ENCODE measurements at regions of chr1 and their contacts with region 1.

Region 1: DNA sequence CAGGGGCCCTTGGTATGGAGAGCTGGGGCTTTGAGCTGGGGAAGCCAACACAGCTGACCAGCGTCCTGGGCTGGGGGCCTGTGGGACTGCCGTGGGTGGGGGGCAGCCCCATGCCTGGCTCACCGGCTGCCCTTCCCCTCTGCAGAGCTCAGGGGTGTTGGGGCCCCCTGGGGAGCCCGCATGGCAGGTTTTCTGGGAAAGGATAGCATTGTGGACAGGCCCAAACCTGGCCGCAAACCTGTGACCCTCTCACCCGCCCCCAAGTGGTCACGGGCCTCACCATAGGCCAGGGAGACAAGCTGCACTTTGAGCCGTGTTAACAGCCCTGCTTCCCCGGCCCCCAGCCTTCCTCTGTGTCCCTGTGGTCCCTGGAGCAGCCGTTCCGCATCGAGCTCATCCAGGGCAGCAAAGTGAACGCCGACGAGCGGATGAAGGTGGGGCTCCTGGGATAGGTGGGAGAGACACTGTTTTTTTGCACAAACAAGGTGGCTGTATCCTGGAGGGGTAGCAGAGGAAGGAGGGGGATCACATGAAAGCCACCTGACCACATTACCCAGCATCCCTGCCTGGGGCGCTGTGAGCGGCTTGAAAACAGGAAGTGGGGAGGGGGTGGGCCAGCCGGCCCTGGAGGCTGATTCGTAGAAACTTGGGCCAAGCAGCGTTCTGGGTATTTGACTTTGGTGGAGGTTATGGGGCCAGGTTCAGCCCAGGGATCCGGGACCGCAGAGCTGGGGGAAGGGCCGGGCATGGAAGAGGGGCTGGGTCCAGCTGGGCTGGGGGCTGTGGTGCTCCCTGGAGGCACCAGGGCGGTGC is 65.9 kb downstream of the PIK3CD start:
- DNase-seq: peak; percentile 90 to 95 (median 91)
- H3K4me3 ChIP-seq: peak overlapping the region; percentile 66 to 82
- H3K4me3 Mint-ChIP-seq: peak overlapping the region; percentile 91 to 96 (median 94)
- H3K27ac ChIP-seq: peak overlapping the region; percentile 58
- H3K27ac Mint-ChIP-seq: peak overlapping the region; percentile 92 to 97 (median 93)
- H3K4me1 ChIP-seq: peaks cover 96% of the 10 kb centered on the region
- H3K4me1 Mint-ChIP-seq: peaks cover 18 to 84% (median 56%) of the 10 kb centered on the region in 4 donors
- H3K27me3 ChIP-seq: no peaks in the 10 kb centered on the region
- H3K27me3 Mint-ChIP-seq: no peaks in the 10 kb centered on the region

Region 2: GRCh38 chr1:9643351-9644256 is 73.8 kb before region 1 on chr1:
- CTCF ChIA-PET with region 1: interaction called, 6 read pairs
- POLR2A ChIA-PET with region 1: interaction called, 23 read pairs
- intact Hi-C with region 1: no loop called
- DNase-seq: peak in 1 of 5 donors; percentile 9
- H3K4me3 ChIP-seq: no peak overlapping the region
- H3K4me3 Mint-ChIP-seq: peak overlapping the region in 7 of 8 donors; percentile 47 to 81 (median 62)
- H3K27ac ChIP-seq: no peak overlapping the region
- H3K27ac Mint-ChIP-seq: peak overlapping the region; percentile 57 to 85 (median 78)
- H3K4me1 ChIP-seq: peaks cover 39% of the 10 kb centered on the region
- H3K4me1 Mint-ChIP-seq: peaks cover 33 to 71% (median 49%) of the 10 kb centered on the region in 4 donors
- H3K27me3 ChIP-seq: no peaks in the 10 kb centered on the region
- H3K27me3 Mint-ChIP-seq: no peaks in the 10 kb centered on the region

Region 3: DNA sequence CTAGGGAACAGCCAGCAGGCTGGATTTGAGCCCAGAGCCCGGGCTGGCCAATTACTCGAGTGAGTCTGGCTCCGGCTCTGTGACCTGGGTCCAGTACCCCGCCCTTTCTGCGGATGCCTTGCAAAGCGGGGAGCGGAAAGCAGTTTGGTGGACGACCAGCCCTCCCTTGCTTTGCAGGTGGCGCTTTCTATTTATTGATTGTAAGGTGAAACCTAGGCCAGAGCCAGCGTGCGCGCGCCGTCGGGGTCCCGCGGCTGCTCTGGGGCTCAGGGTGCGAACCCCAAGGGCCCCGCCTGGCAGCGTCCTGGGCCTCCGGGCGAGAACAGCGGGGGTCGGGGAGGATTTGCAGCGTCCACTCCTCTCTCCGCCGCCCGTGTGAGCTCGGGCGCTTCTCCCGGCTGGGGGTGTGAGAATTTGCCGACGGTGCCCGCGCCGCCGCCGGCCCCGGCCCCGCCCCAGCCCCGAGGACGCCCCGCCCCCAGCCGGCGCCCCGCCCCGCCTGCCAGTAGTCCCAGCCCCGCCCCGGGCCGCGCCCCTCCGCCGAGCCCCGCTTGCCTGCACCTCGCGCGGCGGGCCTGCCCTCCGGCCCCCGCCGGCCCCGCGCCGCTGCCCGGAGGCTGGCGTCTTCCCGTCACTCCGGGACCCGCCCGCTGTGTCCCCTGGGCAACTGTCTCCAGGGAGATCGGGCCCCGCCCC is 28.2 kb before region 1 on chr1:
- CTCF ChIA-PET with region 1: interaction called, 7 read pairs
- POLR2A ChIA-PET with region 1: interaction called, 108 read pairs
- intact Hi-C with region 1: loop called (anchors 1 kb)
- DNase-seq: peak; percentile 75 to 80 (median 78)
- H3K4me3 ChIP-seq: peak overlapping the region; percentile 57 to 63
- H3K4me3 Mint-ChIP-seq: peak overlapping the region; percentile 61 to 89 (median 78)
- H3K27ac ChIP-seq: peak overlapping the region; percentile 37
- H3K27ac Mint-ChIP-seq: peak overlapping the region in 4 of 7 donors; percentile 46 to 85 (median 52)
- H3K4me1 ChIP-seq: peaks cover 77% of the 10 kb centered on the region
- H3K4me1 Mint-ChIP-seq: peaks cover 38 to 80% (median 60%) of the 10 kb centered on the region in 4 donors
- H3K27me3 ChIP-seq: no peaks in the 10 kb centered on the region
- H3K27me3 Mint-ChIP-seq: no peaks in the 10 kb centered on the region

Region 4: DNA sequence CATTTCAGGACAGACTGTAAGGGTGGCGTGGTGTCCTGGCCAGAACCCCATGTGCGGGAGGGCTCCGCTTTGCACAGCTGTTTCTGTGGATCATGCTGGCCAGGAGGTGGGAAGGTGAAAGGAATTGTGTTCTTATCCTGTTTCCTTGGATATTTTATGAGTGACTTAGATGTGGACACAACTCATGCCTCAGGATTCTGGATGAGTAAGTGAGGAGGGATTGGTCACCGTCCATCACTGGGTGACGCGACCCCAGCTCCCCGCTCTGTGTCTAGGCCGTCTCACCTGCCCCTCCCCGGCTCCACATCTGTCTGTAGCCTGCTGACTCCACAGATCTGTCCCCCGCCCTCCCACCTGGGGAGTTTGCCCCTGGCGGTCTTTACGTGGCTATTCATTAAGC is 17.1 kb before region 1 on chr1:
- CTCF ChIA-PET with region 1: interaction called, 44 read pairs
- POLR2A ChIA-PET with region 1: interaction called, 85 read pairs
- intact Hi-C with region 1: no loop called
- DNase-seq: no peak
- H3K4me3 ChIP-seq: no peak overlapping the region
- H3K4me3 Mint-ChIP-seq: no peak overlapping the region
- H3K27ac ChIP-seq: no peak overlapping the region
- H3K27ac Mint-ChIP-seq: peak overlapping the region in 5 of 7 donors; percentile 46 to 80 (median 71)
- H3K4me1 ChIP-seq: peaks cover 59% of the 10 kb centered on the region
- H3K4me1 Mint-ChIP-seq: peaks cover 41 to 74% (median 57%) of the 10 kb centered on the region in 4 donors
- H3K27me3 ChIP-seq: no peaks in the 10 kb centered on the region
- H3K27me3 Mint-ChIP-seq: no peaks in the 10 kb centered on the region

Region 5: DNA sequence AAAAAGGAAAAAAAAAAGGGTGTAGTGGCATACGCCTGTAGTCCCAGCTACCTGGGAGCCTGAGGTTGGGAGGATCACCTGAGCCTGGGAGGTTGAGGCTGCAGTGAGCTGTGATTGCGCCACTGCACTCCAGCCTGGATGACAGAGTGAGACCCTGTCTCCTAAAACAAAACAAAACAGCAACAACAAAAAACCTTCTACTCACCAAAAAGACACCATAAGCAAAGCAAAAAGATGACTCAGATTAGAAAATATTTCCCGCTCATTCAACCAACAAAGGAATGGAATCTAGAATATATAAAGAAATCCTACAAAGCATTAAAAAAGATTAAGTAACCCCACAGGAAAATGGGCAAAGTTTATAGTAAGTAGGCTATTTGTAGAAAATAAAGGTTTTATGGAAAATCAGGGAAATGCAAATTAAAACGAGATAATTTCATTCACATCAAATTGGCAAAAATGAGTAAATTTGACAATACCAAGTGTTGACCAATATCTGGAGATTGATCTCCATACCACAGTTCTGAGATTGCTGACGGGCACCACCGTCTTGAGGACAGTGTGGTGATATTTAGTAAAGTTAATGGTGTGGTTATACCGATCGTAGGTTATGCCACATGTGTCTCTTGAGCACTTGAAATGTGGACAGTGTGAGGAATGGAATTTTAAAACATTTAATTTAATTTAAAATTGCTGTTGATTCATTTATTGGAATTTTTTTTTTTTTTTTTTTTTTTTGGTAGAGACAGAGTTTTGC is 11.9 kb before region 1 on chr1:
- CTCF ChIA-PET with region 1: interaction called, 44 read pairs
- POLR2A ChIA-PET with region 1: interaction called, 85 read pairs
- intact Hi-C with region 1: no loop called
- DNase-seq: no peak
- H3K4me3 ChIP-seq: no peak overlapping the region
- H3K4me3 Mint-ChIP-seq: peak overlapping the region in 6 of 8 donors; percentile 30 to 75 (median 50)
- H3K27ac ChIP-seq: no peak overlapping the region
- H3K27ac Mint-ChIP-seq: peak overlapping the region; percentile 20 to 78 (median 66)
- H3K4me1 ChIP-seq: peaks cover 62% of the 10 kb centered on the region
- H3K4me1 Mint-ChIP-seq: peaks cover 42 to 82% (median 61%) of the 10 kb centered on the region in 4 donors
- H3K27me3 ChIP-seq: no peaks in the 10 kb centered on the region
- H3K27me3 Mint-ChIP-seq: no peaks in the 10 kb centered on the region

Region 6: GRCh38 chr1:9730096-9730901 is 12.9 kb after region 1 on chr1:
- CTCF ChIA-PET with region 1: interaction called, 34 read pairs
- POLR2A ChIA-PET with region 1: interaction called, 187 read pairs
- intact Hi-C with region 1: loop called (anchors 1 kb)
- DNase-seq: no peak
- H3K4me3 ChIP-seq: no peak overlapping the region
- H3K4me3 Mint-ChIP-seq: peak overlapping the region in 7 of 8 donors; percentile 22 to 71 (median 49)
- H3K27ac ChIP-seq: no peak overlapping the region
- H3K27ac Mint-ChIP-seq: peak overlapping the region; percentile 68 to 93 (median 90)
- H3K4me1 ChIP-seq: peaks cover 41% of the 10 kb centered on the region
- H3K4me1 Mint-ChIP-seq: peaks cover 23 to 68% (median 49%) of the 10 kb centered on the region in 4 donors
- H3K27me3 ChIP-seq: no peaks in the 10 kb centered on the region
- H3K27me3 Mint-ChIP-seq: no peaks in the 10 kb centered on the region

Region 7: GRCh38 chr1:9809100-9809510 is 91.7 kb after region 1 on chr1:
- CTCF ChIA-PET with region 1: no interaction called
- POLR2A ChIA-PET with region 1: no interaction called
- intact Hi-C with region 1: no loop called
- DNase-seq: no peak
- H3K4me3 ChIP-seq: no peak overlapping the region
- H3K4me3 Mint-ChIP-seq: peak overlapping the region in 1 of 8 donors; percentile 45
- H3K27ac ChIP-seq: no peak overlapping the region
- H3K27ac Mint-ChIP-seq: peak overlapping the region in 6 of 7 donors; percentile 13 to 66 (median 44)
- H3K4me1 ChIP-seq: peaks cover 43% of the 10 kb centered on the region
- H3K4me1 Mint-ChIP-seq: peaks cover 31 to 69% (median 47%) of the 10 kb centered on the region in 4 donors
- H3K27me3 ChIP-seq: no peaks in the 10 kb centered on the region
- H3K27me3 Mint-ChIP-seq: no peaks in the 10 kb centered on the region

Region 8: DNA sequence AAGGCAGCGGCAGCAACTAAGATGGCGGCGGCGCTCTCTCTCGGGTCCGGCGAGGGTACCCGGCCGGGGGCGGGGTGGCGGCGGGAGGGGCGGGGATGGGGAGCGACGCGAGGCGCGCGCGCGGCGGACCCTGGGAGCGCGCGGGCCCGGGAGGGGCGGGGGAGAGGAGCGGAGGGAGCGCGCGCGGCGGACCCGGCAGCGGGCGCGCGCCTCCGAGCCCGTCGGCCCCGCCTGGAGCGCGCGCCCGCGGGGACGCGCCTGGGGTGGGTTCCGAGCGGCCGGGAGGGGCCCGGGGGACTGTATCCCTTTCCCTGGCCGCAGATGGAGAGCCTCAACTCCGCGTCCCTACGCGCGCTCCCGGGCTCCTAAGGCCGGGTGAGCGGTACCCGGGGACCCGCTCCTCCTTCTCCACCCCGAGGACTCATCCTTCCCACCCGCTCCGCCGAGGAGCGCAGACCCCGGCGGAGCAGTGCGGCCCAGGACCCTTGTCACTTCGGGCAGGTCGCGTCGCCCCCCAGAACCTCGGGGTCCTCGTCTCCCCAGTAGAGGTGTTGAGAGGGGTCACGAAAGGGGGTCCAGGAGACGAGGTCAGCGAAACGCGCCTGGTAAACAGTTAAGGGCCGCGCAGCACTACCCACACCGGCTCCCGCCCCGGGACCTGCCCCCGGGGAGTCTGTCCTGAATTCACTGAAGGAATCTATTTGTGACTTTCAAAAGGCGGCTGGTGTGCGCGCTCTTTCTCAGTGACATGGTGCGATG is 106.7 kb after region 1 on chr1 and contains the start of gene CLSTN1:
- CTCF ChIA-PET with region 1: interaction called, 3 read pairs
- POLR2A ChIA-PET with region 1: interaction called, 5 read pairs
- intact Hi-C with region 1: loop called (anchors 5 kb)
- DNase-seq: peak; percentile 85 to 92 (median 86)
- H3K4me3 ChIP-seq: peak within 1 kb of the TSS; percentile 73 to 76
- H3K4me3 Mint-ChIP-seq: peak within 1 kb of the TSS; percentile 94 to 99 (median 97)
- H3K27ac ChIP-seq: peak within 1 kb of the TSS; percentile 55
- H3K27ac Mint-ChIP-seq: peak within 1 kb of the TSS; percentile 90 to 97 (median 96)
- H3K4me1 ChIP-seq: peaks cover 55% of the 10 kb centered on the region
- H3K4me1 Mint-ChIP-seq: peaks cover 25 to 68% (median 41%) of the 10 kb centered on the region in 4 donors
- H3K27me3 ChIP-seq: no peaks in the 10 kb centered on the region
- H3K27me3 Mint-ChIP-seq: no peaks in the 10 kb centered on the region
- total RNA-seq, gene CLSTN1: 107 to 109 TPM

Measured in CD4-positive, alpha-beta memory T cell (primary cell).